CD8-positive, alpha-beta T cell (primary cell): ENCODE measurements at regions of chr4 and their contacts with region 1.

Region 1: GRCh38 chr4:48779998-48780742 is at the start of gene FRYL:
- DNase-seq: peak; percentile 94 to 99 (median 96)
- ATAC-seq: peak; percentile 85
- H3K4me3 ChIP-seq: peak within 1 kb of the TSS; percentile 57 to 80
- H3K4me3 Mint-ChIP-seq: peak within 1 kb of the TSS; percentile 91
- H3K27ac ChIP-seq: peak within 1 kb of the TSS; percentile 73 to 84
- H3K27ac Mint-ChIP-seq: peak within 1 kb of the TSS; percentile 93
- H3K4me1 ChIP-seq: peaks cover 35% of the 10 kb centered on the region
- H3K4me1 Mint-ChIP-seq: peaks cover 47% of the 10 kb centered on the region
- H3K27me3 ChIP-seq: no peaks in the 10 kb centered on the region
- H3K27me3 Mint-ChIP-seq: no peaks in the 10 kb centered on the region
- CTCF ChIP-seq: no peak
- total RNA-seq, gene FRYL: 62.9 to 66.7 TPM

Region 2: DNA sequence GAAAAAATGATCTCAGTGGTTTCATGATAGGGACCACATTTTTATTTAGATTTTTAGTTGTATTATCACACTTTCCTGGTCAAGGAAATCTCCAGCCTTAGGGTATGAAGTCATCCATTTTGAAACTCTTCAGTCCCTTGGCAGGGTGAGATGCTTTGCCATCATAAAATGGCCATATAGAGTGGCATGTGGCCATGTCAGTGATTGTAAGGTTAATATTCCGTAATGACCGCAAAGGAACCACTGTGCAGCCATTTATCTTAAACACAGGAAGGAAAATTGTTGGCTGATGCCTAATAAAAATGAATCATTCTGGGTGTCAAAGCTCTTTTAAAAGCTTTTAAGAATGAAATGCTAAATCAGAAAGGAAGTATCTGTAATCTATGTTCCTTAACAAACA is 1352.2 kb before region 1 on chr4:
- CTCF ChIA-PET with region 1: no interaction called
- POLR2A ChIA-PET with region 1: no interaction called
- intact Hi-C with region 1: no loop called
- DNase-seq: no peak
- ATAC-seq: no peak
- H3K4me3 ChIP-seq: no peak overlapping the region
- H3K4me3 Mint-ChIP-seq: no peak overlapping the region
- H3K27ac ChIP-seq: no peak overlapping the region
- H3K27ac Mint-ChIP-seq: no peak overlapping the region
- H3K4me1 ChIP-seq: no peaks in the 10 kb centered on the region
- H3K4me1 Mint-ChIP-seq: no peaks in the 10 kb centered on the region
- H3K27me3 ChIP-seq: no peaks in the 10 kb centered on the region
- H3K27me3 Mint-ChIP-seq: no peaks in the 10 kb centered on the region
- CTCF ChIP-seq: no peak

Region 3: GRCh38 chr4:48127682-48128394 is 652.3 kb before region 1 on chr4:
- CTCF ChIA-PET with region 1: no interaction called
- POLR2A ChIA-PET with region 1: no interaction called
- intact Hi-C with region 1: loop called in 1 of 2 experiments (anchors 5 kb)
- DNase-seq: peak; percentile 27 to 81 (median 73)
- ATAC-seq: peak; percentile 67
- H3K4me3 ChIP-seq: peak overlapping the region in 1 of 2 experiments; percentile 18
- H3K4me3 Mint-ChIP-seq: peak overlapping the region; percentile 91
- H3K27ac ChIP-seq: peak overlapping the region; percentile 33 to 67
- H3K27ac Mint-ChIP-seq: peak overlapping the region; percentile 92
- H3K4me1 ChIP-seq: peaks cover 76% of the 10 kb centered on the region
- H3K4me1 Mint-ChIP-seq: peaks cover 87% of the 10 kb centered on the region
- H3K27me3 ChIP-seq: no peaks in the 10 kb centered on the region
- H3K27me3 Mint-ChIP-seq: no peaks in the 10 kb centered on the region
- CTCF ChIP-seq: peak; percentile 59

Region 4: GRCh38 chr4:48681856-48682255 is 98.3 kb before region 1 on chr4:
- CTCF ChIA-PET with region 1: no interaction called
- POLR2A ChIA-PET with region 1: no interaction called
- intact Hi-C with region 1: loop called in 1 of 2 experiments (anchors 5 kb)
- DNase-seq: peak in 2 of 9 experiments; percentile 36 to 58
- ATAC-seq: peak; percentile 71
- H3K4me3 ChIP-seq: no peak overlapping the region
- H3K4me3 Mint-ChIP-seq: no peak overlapping the region
- H3K27ac ChIP-seq: no peak overlapping the region
- H3K27ac Mint-ChIP-seq: peak overlapping the region; percentile 42
- H3K4me1 ChIP-seq: no peaks in the 10 kb centered on the region
- H3K4me1 Mint-ChIP-seq: peaks cover 47% of the 10 kb centered on the region
- H3K27me3 ChIP-seq: no peaks in the 10 kb centered on the region
- H3K27me3 Mint-ChIP-seq: no peaks in the 10 kb centered on the region
- CTCF ChIP-seq: peak; percentile 42

Region 5: DNA sequence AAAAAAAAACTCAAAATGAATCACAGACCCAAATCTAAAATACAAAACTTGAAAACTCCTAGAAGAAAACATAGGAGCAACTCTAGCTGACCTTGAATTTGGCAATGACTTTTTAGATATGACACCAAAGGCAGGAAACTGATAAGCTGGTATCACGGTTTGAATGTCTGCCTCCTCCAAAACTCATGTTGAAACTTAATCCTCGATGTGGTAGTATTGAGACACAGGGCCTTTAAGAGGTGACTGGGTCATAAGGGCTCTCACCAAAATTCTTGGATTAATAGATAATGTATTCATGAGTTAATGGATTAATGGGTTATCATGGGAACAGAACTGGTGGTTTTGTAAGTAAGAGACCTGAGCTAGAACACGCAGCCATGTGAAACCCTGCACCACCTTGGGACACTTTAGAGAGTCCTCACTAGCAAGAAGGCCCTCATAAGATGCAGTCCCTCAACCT is 40.6 kb before region 1 on chr4:
- CTCF ChIA-PET with region 1: no interaction called
- POLR2A ChIA-PET with region 1: no interaction called
- intact Hi-C with region 1: loop called (anchors 5 kb)
- DNase-seq: no peak
- ATAC-seq: no peak
- H3K4me3 ChIP-seq: no peak overlapping the region
- H3K4me3 Mint-ChIP-seq: peak overlapping the region; percentile 39
- H3K27ac ChIP-seq: no peak overlapping the region
- H3K27ac Mint-ChIP-seq: peak overlapping the region; percentile 6
- H3K4me1 ChIP-seq: peaks cover 46% of the 10 kb centered on the region
- H3K4me1 Mint-ChIP-seq: peaks cover 73% of the 10 kb centered on the region
- H3K27me3 ChIP-seq: no peaks in the 10 kb centered on the region
- H3K27me3 Mint-ChIP-seq: no peaks in the 10 kb centered on the region
- CTCF ChIP-seq: no peak